ENCODE measurements at regions of chr9 and their contacts with region 1.

Region 1: GRCh38 chr9:9412241-9412640 is 1200.6 kb downstream of the PTPRD start:
- DNase-seq: no peak
- H3K4me3 ChIP-seq: no peak overlapping the region
- H3K27ac ChIP-seq: no peak overlapping the region
- H3K4me1 ChIP-seq: no peaks in the 10 kb centered on the region
- H3K27me3 ChIP-seq: no peaks in the 10 kb centered on the region
- CTCF ChIP-seq: no peak
- EP300 ChIP-seq: no peak
- POLR2A ChIP-seq: no peak

Region 2: DNA sequence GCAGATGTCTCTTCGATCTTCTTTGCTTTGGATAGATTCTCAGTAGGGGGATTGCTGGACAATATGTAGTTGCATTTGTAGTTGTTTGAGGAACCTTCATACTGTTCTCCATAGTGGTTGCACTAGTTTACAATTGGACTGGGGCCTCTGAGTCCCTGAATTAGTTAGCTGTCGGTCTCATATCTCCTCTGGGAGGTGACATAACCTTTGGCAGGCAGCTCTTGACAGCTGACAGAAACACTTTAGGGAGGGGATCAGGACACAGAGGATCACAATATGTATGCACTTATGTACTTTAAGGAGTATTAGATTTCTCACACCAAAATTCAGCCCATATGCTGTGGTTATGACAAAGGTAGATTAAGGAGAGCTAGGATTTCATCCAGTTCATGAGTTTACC is 332.8 kb before region 1 on chr9:
- intact Hi-C with region 1: no loop called
- DNase-seq: no peak
- H3K4me3 ChIP-seq: no peak overlapping the region
- H3K27ac ChIP-seq: no peak overlapping the region
- H3K4me1 ChIP-seq: no peaks in the 10 kb centered on the region
- H3K27me3 ChIP-seq: no peaks in the 10 kb centered on the region
- CTCF ChIP-seq: no peak
- EP300 ChIP-seq: no peak
- POLR2A ChIP-seq: no peak

Region 3: DNA sequence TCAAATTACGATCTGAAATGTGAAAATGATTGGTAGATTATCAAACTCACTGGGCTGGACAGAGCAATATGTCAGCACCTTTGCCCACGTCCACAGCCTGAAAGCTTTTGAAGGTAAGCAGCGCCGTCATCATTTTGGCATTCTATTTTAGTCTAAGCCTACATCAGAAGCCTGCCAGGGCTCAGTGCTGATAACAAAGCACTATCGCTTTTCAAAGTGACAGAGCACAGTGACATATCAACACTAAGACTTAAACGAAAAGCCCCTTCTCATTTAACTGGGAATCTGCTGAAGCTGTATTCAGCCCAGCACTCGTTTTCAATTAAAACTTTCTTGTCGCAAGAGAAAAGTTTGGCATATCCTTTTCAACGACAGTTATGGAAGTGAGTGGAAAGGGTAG is 124.3 kb after region 1 on chr9:
- intact Hi-C with region 1: no loop called
- DNase-seq: no peak
- H3K4me3 ChIP-seq: no peak overlapping the region
- H3K27ac ChIP-seq: no peak overlapping the region
- H3K4me1 ChIP-seq: no peaks in the 10 kb centered on the region
- H3K27me3 ChIP-seq: no peaks in the 10 kb centered on the region
- CTCF ChIP-seq: no peak
- EP300 ChIP-seq: no peak
- POLR2A ChIP-seq: no peak

Region 4: DNA sequence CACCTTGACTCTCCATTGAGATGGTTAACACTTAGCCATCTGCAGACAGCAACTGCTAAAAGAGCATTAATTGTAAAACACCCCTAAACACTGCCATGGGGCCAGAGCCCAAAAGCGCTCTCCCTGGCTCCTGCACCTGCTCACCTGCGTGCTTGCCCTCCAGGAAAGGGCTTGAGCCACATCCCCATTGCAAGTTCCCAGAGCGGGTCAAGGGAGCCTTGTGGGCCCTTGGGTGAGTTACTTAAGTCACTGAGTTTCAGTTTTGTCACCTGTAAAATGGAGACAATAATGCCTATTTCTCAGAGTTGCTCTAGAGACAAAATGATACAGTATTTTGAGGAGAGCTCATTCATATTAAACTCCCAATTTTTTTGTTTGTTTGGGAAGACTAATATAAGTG is 232.8 kb after region 1 on chr9:
- intact Hi-C with region 1: loop called in 1 of 4 experiments (anchors 10 kb)
- DNase-seq: no peak
- H3K4me3 ChIP-seq: no peak overlapping the region
- H3K27ac ChIP-seq: no peak overlapping the region
- H3K4me1 ChIP-seq: no peaks in the 10 kb centered on the region
- H3K27me3 ChIP-seq: no peaks in the 10 kb centered on the region
- CTCF ChIP-seq: no peak
- EP300 ChIP-seq: no peak
- POLR2A ChIP-seq: no peak

Region 5: GRCh38 chr9:9730174-9730573 is 317.9 kb after region 1 on chr9:
- intact Hi-C with region 1: no loop called
- DNase-seq: no peak
- H3K4me3 ChIP-seq: no peak overlapping the region
- H3K27ac ChIP-seq: no peak overlapping the region
- H3K4me1 ChIP-seq: no peaks in the 10 kb centered on the region
- H3K27me3 ChIP-seq: no peaks in the 10 kb centered on the region
- CTCF ChIP-seq: no peak
- EP300 ChIP-seq: no peak
- POLR2A ChIP-seq: no peak